ENCODE measurements at regions of chr12 and their contacts with region 1.

Region 1: GRCh38 chr12:6533923-6534694 is at the start of gene GAPDH:
- DNase-seq: peak; percentile 95
- ATAC-seq: peak; percentile 69
- H3K4me3 ChIP-seq: peak within 1 kb of the TSS; percentile 94 to 99 (median 97)
- H3K27ac ChIP-seq: peak within 1 kb of the TSS; percentile 97
- H3K4me1 ChIP-seq: peaks cover 53% of the 10 kb centered on the region
- H3K27me3 ChIP-seq: no peaks in the 10 kb centered on the region; a peak in 1 of 5 replicates
- CTCF ChIP-seq: no peak
- EP300 ChIP-seq: peak; percentile 14 to 26; a peak in 2 of 4 replicates
- POLR2A ChIP-seq: peak in 1 of 2 experiments; percentile 98; a peak in 2 of 4 replicates
- RAD21 ChIP-seq: no peak
- total RNA-seq, gene GAPDH: 3,038 and 4,052 TPM in 2 replicates

Region 2: DNA sequence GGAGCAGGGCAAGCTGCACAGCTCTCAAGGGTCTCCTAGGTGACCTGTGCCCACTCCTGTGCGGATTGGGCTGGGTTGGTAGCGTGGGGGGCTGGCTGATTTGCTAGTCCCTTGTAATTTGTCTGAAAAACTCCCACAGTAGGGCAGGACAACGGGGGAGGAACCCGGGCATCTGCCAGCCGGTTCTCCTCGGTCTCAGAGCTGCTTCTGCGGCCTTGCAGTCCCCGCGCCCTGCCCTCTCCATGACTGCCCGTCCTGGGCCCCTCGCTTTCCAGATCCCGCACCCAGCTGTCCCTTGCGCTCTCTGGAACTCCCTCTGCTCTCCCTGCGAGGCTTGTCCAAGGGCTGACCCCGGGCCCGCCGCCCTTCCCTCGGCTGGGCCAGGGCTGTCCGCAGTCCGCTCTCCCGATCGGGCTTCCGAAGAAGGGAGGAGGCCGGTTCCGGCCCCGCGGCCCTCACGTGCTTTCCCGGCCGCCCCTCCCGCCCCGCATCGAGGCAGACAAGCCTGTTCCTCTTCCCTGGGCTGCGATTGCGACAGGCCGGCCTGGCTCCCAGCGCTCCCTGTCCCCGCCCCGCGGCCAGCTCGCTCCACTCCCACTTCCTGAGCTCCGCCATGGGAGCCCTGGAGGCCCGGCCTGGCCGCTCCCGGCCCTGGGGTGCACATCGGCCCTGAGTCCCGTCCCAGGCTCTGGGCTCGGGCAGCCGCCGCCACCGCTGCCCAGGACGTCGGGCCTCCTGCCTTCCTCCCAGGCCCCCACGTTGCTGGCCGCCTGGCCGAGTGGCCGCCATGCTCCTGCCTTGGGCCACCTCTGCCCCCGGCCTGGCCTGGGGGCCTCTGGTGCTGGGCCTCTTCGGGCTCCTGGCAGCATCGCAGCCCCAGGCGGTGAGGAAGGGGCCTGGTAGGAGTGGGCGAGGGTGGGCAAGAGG is 150.3 kb before region 1 on chr12 and contains the start of gene LTBR:
- CTCF ChIA-PET with region 1: no interaction called
- POLR2A ChIA-PET with region 1: interaction called, 15 read pairs
- in situ Hi-C with region 1: no loop called
- intact Hi-C with region 1: no loop called
- DNase-seq: peak; percentile 83
- ATAC-seq: peak; percentile 91
- H3K4me3 ChIP-seq: peak within 1 kb of the TSS; percentile 81 to 95 (median 87)
- H3K27ac ChIP-seq: peak within 1 kb of the TSS; percentile 86
- H3K4me1 ChIP-seq: peaks cover 59% of the 10 kb centered on the region
- H3K27me3 ChIP-seq: no peaks in the 10 kb centered on the region; a peak in 1 of 5 replicates
- CTCF ChIP-seq: peak; percentile 52; the same call in 1 of the 2 replicates
- EP300 ChIP-seq: peak in 1 of 2 experiments; percentile 33; a peak in 1 of 4 replicates
- POLR2A ChIP-seq: peak; percentile 67 to 74; a peak in 3 of 4 replicates
- RAD21 ChIP-seq: peak; percentile 36; the same call in 1 of the 2 replicates
- total RNA-seq, gene LTBR: 12.1 and 34.8 TPM in 2 replicates

Region 3: DNA sequence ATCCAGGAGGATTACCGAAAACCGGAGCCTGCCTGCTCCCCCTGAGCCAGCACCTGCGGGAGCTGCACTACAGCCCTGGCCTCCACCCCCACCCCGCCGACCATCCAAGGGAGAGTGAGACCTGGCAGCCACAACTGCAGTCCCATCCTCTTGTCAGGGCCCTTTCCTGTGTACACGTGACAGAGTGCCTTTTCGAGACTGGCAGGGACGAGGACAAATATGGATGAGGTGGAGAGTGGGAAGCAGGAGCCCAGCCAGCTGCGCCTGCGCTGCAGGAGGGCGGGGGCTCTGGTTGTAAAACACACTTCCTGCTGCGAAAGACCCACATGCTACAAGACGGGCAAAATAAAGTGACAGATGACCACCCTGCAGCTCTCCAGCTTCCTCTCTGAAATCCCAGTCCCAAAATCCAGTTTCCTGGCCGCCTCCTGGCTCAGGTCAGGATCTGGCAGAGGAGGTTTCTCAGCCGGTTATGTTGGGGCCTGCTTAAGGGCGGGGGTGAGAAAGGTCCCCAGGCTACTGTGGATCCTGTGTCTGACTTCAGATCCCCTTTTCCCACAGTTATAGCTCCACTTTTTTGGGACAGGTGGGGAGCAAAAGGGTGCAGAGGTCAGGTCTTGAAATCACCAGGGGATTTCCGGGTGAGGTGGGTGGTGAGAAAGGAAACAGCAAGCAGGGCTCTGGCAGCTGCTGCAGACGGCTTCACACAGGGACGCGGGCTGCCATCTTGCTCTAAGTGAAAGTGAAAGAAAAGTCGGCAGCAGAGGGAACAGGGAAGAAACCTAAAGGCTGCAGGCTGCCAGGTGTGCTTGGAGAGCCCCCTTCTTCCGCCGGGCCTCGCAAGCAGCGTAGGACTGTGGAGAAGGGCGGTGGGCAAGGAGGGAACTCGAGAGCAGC is 82.5 kb before region 1 on chr12 and contains the start of gene TAPBPL:
- CTCF ChIA-PET with region 1: no interaction called
- POLR2A ChIA-PET with region 1: interaction called, 18 read pairs
- in situ Hi-C with region 1: no loop called
- intact Hi-C with region 1: no loop called
- DNase-seq: peak; percentile 89
- ATAC-seq: peak; percentile 94
- H3K4me3 ChIP-seq: peak within 1 kb of the TSS; percentile 87 to 94 (median 90)
- H3K27ac ChIP-seq: peak within 1 kb of the TSS; percentile 90
- H3K4me1 ChIP-seq: peaks cover 34% of the 10 kb centered on the region
- H3K27me3 ChIP-seq: no peaks in the 10 kb centered on the region; a peak in 1 of 5 replicates
- CTCF ChIP-seq: no peak
- EP300 ChIP-seq: no peak
- POLR2A ChIP-seq: peak; percentile 68 to 79
- RAD21 ChIP-seq: no peak
- total RNA-seq, gene TAPBPL: 3.2 and 10.0 TPM in 2 replicates

Region 4: GRCh38 chr12:6493497-6494257 is 40.4 kb before region 1 on chr12 and contains the start of gene NCAPD2:
- CTCF ChIA-PET with region 1: no interaction called
- POLR2A ChIA-PET with region 1: interaction called, 25 read pairs
- in situ Hi-C with region 1: no loop called
- intact Hi-C with region 1: loop called (anchors 2 kb)
- DNase-seq: peak; percentile 94
- ATAC-seq: peak; percentile 94
- H3K4me3 ChIP-seq: peak within 1 kb of the TSS; percentile 80 to 83 (median 81)
- H3K27ac ChIP-seq: peak within 1 kb of the TSS; percentile 98
- H3K4me1 ChIP-seq: peaks cover 38% of the 10 kb centered on the region
- H3K27me3 ChIP-seq: no peaks in the 10 kb centered on the region; a peak in 1 of 5 replicates
- CTCF ChIP-seq: no peak; the same call in 1 of the 2 replicates
- EP300 ChIP-seq: no peak
- POLR2A ChIP-seq: peak; percentile 5 to 68; a peak in 3 of 4 replicates
- RAD21 ChIP-seq: no peak
- total RNA-seq, gene NCAPD2: 65.6 and 100 TPM in 2 replicates

Region 5: DNA sequence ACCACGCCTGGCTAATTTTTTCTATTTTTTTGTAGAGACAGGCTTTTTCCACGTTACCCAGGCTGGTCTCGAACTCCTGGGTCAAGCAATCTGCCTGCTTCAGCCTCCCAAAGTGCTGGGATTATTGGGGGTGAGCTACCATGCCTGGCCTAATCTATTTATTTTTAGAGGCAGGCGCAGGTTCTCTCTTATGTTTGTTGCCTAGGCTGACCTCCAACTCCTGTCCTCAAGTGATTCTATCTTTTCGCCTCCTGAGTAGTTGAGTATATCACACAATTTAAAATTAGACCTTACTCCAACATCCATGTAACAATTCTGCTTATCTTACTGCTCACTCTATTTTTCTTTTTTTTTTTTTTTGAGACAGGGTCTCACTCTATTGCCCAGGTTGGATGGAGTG is 119.9 kb after region 1 on chr12:
- CTCF ChIA-PET with region 1: no interaction called
- POLR2A ChIA-PET with region 1: no interaction called
- in situ Hi-C with region 1: no loop called
- intact Hi-C with region 1: no loop called
- DNase-seq: no peak
- ATAC-seq: no peak
- H3K4me3 ChIP-seq: no peak overlapping the region
- H3K27ac ChIP-seq: no peak overlapping the region
- H3K4me1 ChIP-seq: no peaks in the 10 kb centered on the region
- H3K27me3 ChIP-seq: no peaks in the 10 kb centered on the region
- CTCF ChIP-seq: no peak
- EP300 ChIP-seq: no peak
- POLR2A ChIP-seq: no peak
- RAD21 ChIP-seq: no peak

Region 6: GRCh38 chr12:6863586-6864321 is 329.6 kb after region 1 on chr12:
- CTCF ChIA-PET with region 1: no interaction called
- POLR2A ChIA-PET with region 1: no interaction called
- in situ Hi-C with region 1: no loop called
- intact Hi-C with region 1: no loop called
- DNase-seq: no peak
- ATAC-seq: no peak
- H3K4me3 ChIP-seq: no peak overlapping the region
- H3K27ac ChIP-seq: no peak overlapping the region
- H3K4me1 ChIP-seq: peaks cover 11% of the 10 kb centered on the region
- H3K27me3 ChIP-seq: no peaks in the 10 kb centered on the region; a peak in 1 of 5 replicates
- CTCF ChIP-seq: no peak
- EP300 ChIP-seq: no peak
- POLR2A ChIP-seq: no peak
- RAD21 ChIP-seq: no peak

Measured in HepG2 (cell line).